IMR-90 (cell line): ENCODE measurements at regions of chr3 and their contacts with region 1.

Region 1: GRCh38 chr3:9932843-9933560 is 632 bp upstream of the CRELD1 start:
- DNase-seq: peak; percentile 72
- ATAC-seq: peak; percentile 72
- H3K4me3 ChIP-seq: peak overlapping the region; percentile 87
- H3K27ac ChIP-seq: no peak overlapping the region; the same call in 1 of the 2 replicates
- H3K4me1 ChIP-seq: peaks cover 9% of the 10 kb centered on the region
- H3K27me3 ChIP-seq: no peaks in the 10 kb centered on the region
- CTCF ChIP-seq: peak; percentile 79
- POLR2A ChIP-seq: no peak
- RAD21 ChIP-seq: peak; percentile 79

Region 2: DNA sequence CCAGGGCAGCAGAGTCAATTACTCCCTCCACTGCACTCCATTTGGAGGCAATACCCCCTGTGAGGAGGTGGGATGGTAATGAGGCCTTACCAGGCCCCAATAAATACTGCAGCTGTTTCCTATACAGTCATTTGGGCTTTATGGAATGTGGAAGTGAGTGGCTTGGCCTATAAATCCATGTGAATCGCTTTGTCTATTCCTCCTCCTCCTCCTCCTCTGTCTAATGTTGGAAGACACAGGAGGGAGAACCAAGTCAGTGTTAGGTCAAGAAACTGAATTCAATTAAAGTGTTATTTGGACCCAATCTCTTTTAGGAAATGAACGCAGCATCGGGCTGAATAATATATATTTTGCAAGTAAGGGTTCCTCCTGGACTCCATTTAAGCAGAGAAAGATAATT is 666.3 kb before region 1 on chr3:
- CTCF ChIA-PET with region 1: no interaction called
- POLR2A ChIA-PET with region 1: no interaction called
- dilution Hi-C with region 1: no loop called
- in situ Hi-C with region 1: no loop called
- intact Hi-C with region 1: no loop called
- DNase-seq: no peak
- ATAC-seq: no peak
- H3K4me3 ChIP-seq: no peak overlapping the region
- H3K27ac ChIP-seq: no peak overlapping the region
- H3K4me1 ChIP-seq: no peaks in the 10 kb centered on the region
- H3K27me3 ChIP-seq: 0 out of 2 replicates have a peak, but pooled peaks cover 2% of the 10 kb centered on the region
- CTCF ChIP-seq: no peak
- POLR2A ChIP-seq: no peak
- RAD21 ChIP-seq: no peak

Region 3: GRCh38 chr3:9715764-9716437 is 217.1 kb before region 1 on chr3:
- CTCF ChIA-PET with region 1: interaction called, 3 read pairs
- POLR2A ChIA-PET with region 1: no interaction called
- dilution Hi-C with region 1: no loop called
- in situ Hi-C with region 1: no loop called
- intact Hi-C with region 1: loop called (anchors 5 kb)
- DNase-seq: peak; percentile 90
- ATAC-seq: peak; percentile 98
- H3K4me3 ChIP-seq: no peak overlapping the region
- H3K27ac ChIP-seq: no peak overlapping the region
- H3K4me1 ChIP-seq: peaks cover 2% of the 10 kb centered on the region; the same call in 1 of the 2 replicates
- H3K27me3 ChIP-seq: peaks cover 23% of the 10 kb centered on the region
- CTCF ChIP-seq: peak; percentile 97
- POLR2A ChIP-seq: no peak
- RAD21 ChIP-seq: peak; percentile 98

Region 4: GRCh38 chr3:9820944-9821532 is 112.0 kb before region 1 on chr3:
- CTCF ChIA-PET with region 1: no interaction called
- POLR2A ChIA-PET with region 1: no interaction called
- dilution Hi-C with region 1: no loop called
- in situ Hi-C with region 1: no loop called
- intact Hi-C with region 1: no loop called
- DNase-seq: peak; percentile 23
- ATAC-seq: peak; percentile 88
- H3K4me3 ChIP-seq: no peak overlapping the region
- H3K27ac ChIP-seq: no peak overlapping the region
- H3K4me1 ChIP-seq: no peaks in the 10 kb centered on the region
- H3K27me3 ChIP-seq: no peaks in the 10 kb centered on the region
- CTCF ChIP-seq: peak; percentile 39
- POLR2A ChIP-seq: no peak
- RAD21 ChIP-seq: peak; percentile 31; the same call in 1 of the 2 replicates

Region 5: GRCh38 chr3:9843715-9844438 is 89.1 kb before region 1 on chr3 and contains the start of gene RPUSD3:
- CTCF ChIA-PET with region 1: no interaction called
- POLR2A ChIA-PET with region 1: no interaction called
- dilution Hi-C with region 1: no loop called
- in situ Hi-C with region 1: no loop called
- intact Hi-C with region 1: loop called (anchors 2 kb)
- DNase-seq: peak; percentile 93
- ATAC-seq: peak; percentile 99
- H3K4me3 ChIP-seq: peak within 1 kb of the TSS; percentile 71
- H3K27ac ChIP-seq: peak within 1 kb of the TSS; percentile 79
- H3K4me1 ChIP-seq: no peaks in the 10 kb centered on the region
- H3K27me3 ChIP-seq: no peaks in the 10 kb centered on the region
- CTCF ChIP-seq: no peak
- POLR2A ChIP-seq: no peak
- RAD21 ChIP-seq: no peak
- total RNA-seq, gene RPUSD3: 30.3 and 30.8 TPM in 2 replicates

Region 6: DNA sequence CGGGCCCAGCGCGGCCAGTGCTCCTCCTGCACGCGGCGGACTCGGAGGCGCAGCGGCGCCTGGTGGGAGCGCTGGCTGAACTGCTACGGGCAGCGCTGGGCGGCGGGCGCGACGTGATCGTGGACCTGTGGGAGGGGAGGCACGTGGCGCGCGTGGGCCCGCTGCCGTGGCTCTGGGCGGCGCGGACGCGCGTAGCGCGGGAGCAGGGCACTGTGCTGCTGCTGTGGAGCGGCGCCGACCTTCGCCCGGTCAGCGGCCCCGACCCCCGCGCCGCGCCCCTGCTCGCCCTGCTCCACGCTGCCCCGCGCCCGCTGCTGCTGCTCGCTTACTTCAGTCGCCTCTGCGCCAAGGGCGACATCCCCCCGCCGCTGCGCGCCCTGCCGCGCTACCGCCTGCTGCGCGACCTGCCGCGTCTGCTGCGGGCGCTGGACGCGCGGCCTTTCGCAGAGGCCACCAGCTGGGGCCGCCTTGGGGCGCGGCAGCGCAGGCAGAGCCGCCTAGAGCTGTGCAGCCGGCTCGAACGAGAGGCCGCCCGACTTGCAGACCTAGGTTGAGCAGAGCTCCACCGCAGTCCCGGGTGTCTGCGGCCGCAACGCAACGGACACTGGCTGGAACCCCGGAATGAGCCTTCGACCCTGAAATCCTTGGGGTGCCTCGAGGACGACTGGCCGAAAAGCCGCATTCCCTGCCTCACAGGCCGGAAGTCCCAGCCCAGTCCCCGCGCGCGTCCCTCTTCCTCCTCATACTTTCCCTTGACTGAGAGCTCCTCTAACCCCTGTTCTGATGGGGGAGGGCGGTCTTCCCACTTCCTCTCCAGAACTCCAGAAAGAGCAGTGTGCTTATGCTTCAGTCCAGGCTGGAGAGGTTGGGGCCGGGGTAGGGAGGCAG is 17.5 kb before region 1 on chr3:
- CTCF ChIA-PET with region 1: interaction called, 3 read pairs
- POLR2A ChIA-PET with region 1: interaction called, 10 read pairs
- dilution Hi-C with region 1: no loop called
- in situ Hi-C with region 1: no loop called
- intact Hi-C with region 1: no loop called
- DNase-seq: peak; percentile 52
- ATAC-seq: peak; percentile 62
- H3K4me3 ChIP-seq: peak overlapping the region; percentile 46
- H3K27ac ChIP-seq: peak overlapping the region; percentile 89
- H3K4me1 ChIP-seq: peaks cover 32% of the 10 kb centered on the region
- H3K27me3 ChIP-seq: no peaks in the 10 kb centered on the region
- CTCF ChIP-seq: peak; percentile 53
- POLR2A ChIP-seq: no peak
- RAD21 ChIP-seq: peak; percentile 60

Region 7: GRCh38 chr3:9946112-9947024 is 13.4 kb after region 1 on chr3:
- CTCF ChIA-PET with region 1: interaction called, 14 read pairs
- POLR2A ChIA-PET with region 1: interaction called, 5 read pairs
- dilution Hi-C with region 1: no loop called
- in situ Hi-C with region 1: no loop called
- intact Hi-C with region 1: no loop called
- DNase-seq: peak; percentile 81
- ATAC-seq: peak; percentile 85
- H3K4me3 ChIP-seq: peak overlapping the region; percentile 49
- H3K27ac ChIP-seq: peak overlapping the region; percentile 35; the same call in 1 of the 2 replicates
- H3K4me1 ChIP-seq: peaks cover 7% of the 10 kb centered on the region; the same call in 1 of the 2 replicates
- H3K27me3 ChIP-seq: no peaks in the 10 kb centered on the region
- CTCF ChIP-seq: peak; percentile 78
- POLR2A ChIP-seq: no peak
- RAD21 ChIP-seq: peak; percentile 78

Region 8: GRCh38 chr3:10041034-10041433 is 108.0 kb after region 1 on chr3:
- CTCF ChIA-PET with region 1: no interaction called
- POLR2A ChIA-PET with region 1: no interaction called
- dilution Hi-C with region 1: no loop called
- in situ Hi-C with region 1: no loop called
- intact Hi-C with region 1: no loop called
- DNase-seq: no peak
- ATAC-seq: no peak
- H3K4me3 ChIP-seq: no peak overlapping the region
- H3K27ac ChIP-seq: no peak overlapping the region
- H3K4me1 ChIP-seq: no peaks in the 10 kb centered on the region
- H3K27me3 ChIP-seq: no peaks in the 10 kb centered on the region
- CTCF ChIP-seq: no peak
- POLR2A ChIP-seq: no peak
- RAD21 ChIP-seq: no peak

Region 9: DNA sequence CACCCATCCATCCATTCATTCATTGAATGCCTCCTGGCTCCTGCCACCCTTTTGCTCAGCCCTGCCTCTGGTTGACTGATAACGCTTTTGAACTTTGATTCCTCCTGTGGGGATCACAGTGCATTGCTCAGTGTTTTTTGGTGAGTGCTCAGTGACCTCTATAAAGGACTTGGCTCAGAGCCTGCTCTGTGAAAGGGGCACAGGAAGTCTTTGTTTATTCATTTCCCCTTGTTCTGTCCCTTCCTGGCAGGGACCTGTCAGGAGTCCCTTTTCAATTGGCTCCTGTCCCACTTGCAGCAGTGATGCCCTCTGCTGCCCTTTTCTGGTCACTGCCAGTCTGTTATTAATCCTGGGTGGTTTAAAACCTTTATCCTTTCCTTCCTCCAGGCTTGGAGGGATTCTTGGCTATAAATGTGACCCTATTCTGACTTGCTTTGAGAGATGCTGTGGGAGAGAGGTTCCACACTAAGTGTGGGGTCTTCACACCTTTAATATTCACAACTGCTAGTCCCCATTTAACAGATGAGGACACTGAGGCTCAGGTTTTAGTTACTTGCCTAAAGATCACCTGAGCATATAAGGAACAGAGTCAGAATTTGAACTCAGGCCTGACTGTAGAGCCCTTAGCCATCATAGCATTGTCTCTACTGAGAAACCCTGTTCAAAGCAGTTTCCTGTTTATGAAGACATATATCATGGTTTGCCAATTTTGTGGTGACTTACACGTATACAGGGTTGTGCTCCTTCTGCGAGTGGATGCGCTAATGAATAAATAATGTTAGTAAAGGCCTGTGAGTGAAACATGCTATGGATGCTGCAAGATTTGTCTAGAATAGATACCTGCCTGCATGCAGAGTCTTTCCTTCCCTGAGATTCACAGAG is 292.0 kb after region 1 on chr3:
- CTCF ChIA-PET with region 1: no interaction called
- POLR2A ChIA-PET with region 1: no interaction called
- dilution Hi-C with region 1: no loop called
- in situ Hi-C with region 1: no loop called
- intact Hi-C with region 1: loop called (anchors 2 kb)
- DNase-seq: peak; percentile 66
- ATAC-seq: peak; percentile 81
- H3K4me3 ChIP-seq: no peak overlapping the region
- H3K27ac ChIP-seq: no peak overlapping the region
- H3K4me1 ChIP-seq: peaks cover 8% of the 10 kb centered on the region
- H3K27me3 ChIP-seq: no peaks in the 10 kb centered on the region
- CTCF ChIP-seq: peak; percentile 84
- POLR2A ChIP-seq: no peak
- RAD21 ChIP-seq: peak; percentile 86

Region 10: DNA sequence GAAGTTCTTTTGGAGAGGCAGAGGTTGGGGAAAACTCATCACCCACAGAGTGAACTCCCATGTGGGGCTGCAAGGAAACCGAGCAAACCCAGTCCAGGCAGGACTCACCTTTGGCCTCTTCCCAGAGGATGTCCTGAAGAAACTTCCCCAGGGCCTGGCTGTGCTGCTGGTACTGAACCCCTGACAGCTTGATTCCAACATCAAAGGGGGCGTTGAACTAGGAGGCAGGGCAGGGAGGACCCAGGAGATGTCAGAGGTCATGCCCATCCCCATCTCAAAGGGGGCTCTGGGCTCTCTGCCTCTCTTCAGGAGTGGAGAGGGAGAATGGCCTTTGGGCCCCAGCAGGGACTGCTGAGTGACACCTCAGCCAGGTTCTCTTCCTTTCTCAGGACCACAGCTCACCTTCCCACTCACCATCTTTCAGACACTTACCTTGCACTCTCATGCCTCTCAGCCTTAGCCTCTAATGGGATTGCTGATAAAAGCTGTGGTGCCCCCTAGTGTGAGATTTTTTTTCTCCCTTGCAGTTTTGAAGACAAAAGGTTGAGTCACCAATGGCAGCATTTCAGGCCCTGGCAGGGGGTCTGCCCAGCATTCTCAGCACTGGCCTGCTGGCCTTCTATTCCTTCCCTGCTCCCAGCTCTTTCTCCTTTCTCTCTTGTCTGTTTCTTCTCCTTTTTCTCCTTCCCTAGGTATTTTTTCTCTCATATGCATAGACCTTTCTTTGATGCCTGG is 353.8 kb after region 1 on chr3:
- CTCF ChIA-PET with region 1: no interaction called
- POLR2A ChIA-PET with region 1: no interaction called
- dilution Hi-C with region 1: no loop called
- in situ Hi-C with region 1: no loop called
- intact Hi-C with region 1: loop called (anchors 1 kb)
- DNase-seq: peak; percentile 74
- ATAC-seq: peak; percentile 76
- H3K4me3 ChIP-seq: no peak overlapping the region
- H3K27ac ChIP-seq: no peak overlapping the region
- H3K4me1 ChIP-seq: no peaks in the 10 kb centered on the region
- H3K27me3 ChIP-seq: no peaks in the 10 kb centered on the region
- CTCF ChIP-seq: peak; percentile 57
- POLR2A ChIP-seq: no peak
- RAD21 ChIP-seq: peak; percentile 53